Left colon (tissue), 2 donors: ENCODE measurements at regions of chr6 and their contacts with region 1.

Region 1: GRCh38 chr6:63352587-63353285 is 33.0 kb upstream of the LGSN start:
- DNase-seq: peak in 1 of 2 donors; percentile 17
- ATAC-seq: peak; percentile 87

Region 2: GRCh38 chr6:63268574-63268973 is 84.2 kb before region 1 on chr6:
- intact Hi-C with region 1: no loop called
- DNase-seq: no peak
- ATAC-seq: no peak

Region 3: GRCh38 chr6:63571881-63572732 is 219.4 kb after region 1 on chr6 and contains the starts of genes LOC128125822 and PTP4A1:
- intact Hi-C with region 1: loop called in 1 of 2 experiments (anchors 10 kb)
- DNase-seq: peak; percentile 98
- ATAC-seq: peak; percentile 79
- total RNA-seq, gene PTP4A1: 155 to 190 TPM